ENCODE measurements at regions of chr13 and their contacts with region 1.

Region 1: DNA sequence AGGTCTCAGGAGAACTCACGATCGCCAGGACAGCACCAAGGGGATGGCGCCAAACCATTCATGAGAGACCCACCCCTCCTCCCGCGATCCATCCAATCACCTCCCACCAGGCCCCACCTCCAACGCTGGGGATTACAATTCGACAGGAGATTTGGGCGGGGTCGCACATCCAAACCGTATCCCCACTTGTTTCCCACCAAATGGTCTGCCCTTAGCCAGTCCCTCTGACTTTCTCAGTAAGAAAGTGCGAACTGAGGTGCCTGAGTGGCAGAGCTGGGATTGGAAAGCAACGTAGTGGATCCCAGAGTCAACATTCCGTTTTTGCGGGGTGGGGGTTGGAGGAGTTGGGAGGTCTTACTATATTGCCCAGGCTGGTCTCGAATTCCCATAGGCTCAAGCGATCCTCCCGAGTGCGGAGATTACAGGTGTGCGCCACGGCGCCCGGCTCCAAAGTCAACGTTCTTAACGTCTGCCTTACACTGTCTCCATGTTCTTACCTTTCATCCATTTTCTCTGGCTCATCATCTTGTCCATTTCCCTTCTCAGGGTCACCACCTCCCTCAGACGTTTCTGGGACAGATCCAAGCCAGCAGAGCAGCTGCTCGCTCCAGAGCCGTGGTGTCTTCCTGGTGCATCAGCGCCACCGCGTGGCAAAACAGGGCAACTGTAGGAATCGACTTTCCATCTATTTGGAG is 102.7 kb upstream of the ABCC4 start:
- DNase-seq: peak; percentile 78
- H3K4me3 ChIP-seq: peak overlapping the region in 2 of 3 experiments; percentile 0 to 18
- H3K27ac ChIP-seq: no peak overlapping the region
- H3K4me1 ChIP-seq: peaks cover 5% of the 10 kb centered on the region
- H3K27me3 ChIP-seq: no peaks in the 10 kb centered on the region
- CTCF ChIP-seq: peak; percentile 88 to 90
- POLR2A ChIP-seq: no peak

Region 2: GRCh38 chr13:94620286-94620896 is 783.6 kb before region 1 on chr13:
- CTCF ChIA-PET with region 1: interaction called, 19 read pairs
- POLR2A ChIA-PET with region 1: no interaction called
- dilution Hi-C with region 1: no loop called
- intact Hi-C with region 1: loop called (anchors 2 kb)
- DNase-seq: peak; percentile 52
- H3K4me3 ChIP-seq: no peak overlapping the region
- H3K27ac ChIP-seq: no peak overlapping the region
- H3K4me1 ChIP-seq: peaks cover 6% of the 10 kb centered on the region
- H3K27me3 ChIP-seq: no peaks in the 10 kb centered on the region
- CTCF ChIP-seq: peak; percentile 62 to 68
- POLR2A ChIP-seq: no peak

Region 3: DNA sequence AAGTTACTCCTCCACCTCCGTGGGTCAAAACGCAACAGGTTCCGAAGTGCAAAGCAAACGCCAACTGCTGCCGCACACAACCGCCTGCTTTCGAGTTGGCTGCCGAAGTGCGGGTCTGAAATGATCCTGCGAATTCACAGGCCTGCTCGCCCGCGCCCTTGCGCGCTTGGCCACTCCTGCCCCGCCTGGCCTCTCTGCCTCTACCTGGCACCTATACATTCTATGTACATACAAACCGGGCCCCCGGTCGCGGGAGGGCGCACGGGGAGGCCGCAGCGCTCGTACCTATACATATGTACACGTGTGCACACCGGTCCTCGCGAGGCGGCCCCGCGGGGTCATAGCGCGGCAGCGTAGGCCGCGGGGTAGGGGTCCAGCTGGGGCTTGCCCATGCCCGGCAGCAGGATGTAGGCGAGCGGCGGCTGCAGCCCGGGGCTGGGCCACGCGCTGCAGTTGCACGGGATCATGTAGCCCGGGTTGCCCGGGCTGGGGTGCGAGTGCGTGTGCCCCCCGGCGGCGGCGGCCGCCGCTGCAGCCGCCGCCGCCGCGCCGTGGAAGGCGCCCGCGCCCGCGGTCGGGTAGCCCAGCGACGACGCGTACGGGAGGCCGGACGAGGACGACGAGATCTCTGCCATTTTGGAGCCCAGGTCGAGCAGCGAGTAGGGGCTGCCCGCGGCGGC is 693.0 kb before region 1 on chr13:
- CTCF ChIA-PET with region 1: interaction called, 8 read pairs
- POLR2A ChIA-PET with region 1: no interaction called
- dilution Hi-C with region 1: no loop called
- intact Hi-C with region 1: loop called (anchors 5 kb)
- DNase-seq: no peak
- H3K4me3 ChIP-seq: no peak overlapping the region
- H3K27ac ChIP-seq: no peak overlapping the region
- H3K4me1 ChIP-seq: peaks cover 12% of the 10 kb centered on the region
- H3K27me3 ChIP-seq: peaks cover 68 to 95% of the 10 kb centered on the region in 2 experiments
- CTCF ChIP-seq: peak; percentile 31 to 33
- POLR2A ChIP-seq: no peak

Region 4: GRCh38 chr13:95301183-95301967 is 102.6 kb before region 1 on chr13 and contains the start of gene ABCC4:
- CTCF ChIA-PET with region 1: interaction called, 147 read pairs
- POLR2A ChIA-PET with region 1: no interaction called
- dilution Hi-C with region 1: no loop called
- intact Hi-C with region 1: loop called (anchors 1 kb)
- DNase-seq: peak; percentile 72
- H3K4me3 ChIP-seq: peak within 1 kb of the TSS; percentile 73 to 91 (median 83)
- H3K27ac ChIP-seq: peak within 1 kb of the TSS; percentile 84
- H3K4me1 ChIP-seq: peaks cover 18% of the 10 kb centered on the region
- H3K27me3 ChIP-seq: no peaks in the 10 kb centered on the region
- CTCF ChIP-seq: peak in 1 of 2 donors; percentile 8
- POLR2A ChIP-seq: peak; percentile 21
- total RNA-seq, gene ABCC4: 14.7 and 15.9 TPM in 2 replicates

Region 5: DNA sequence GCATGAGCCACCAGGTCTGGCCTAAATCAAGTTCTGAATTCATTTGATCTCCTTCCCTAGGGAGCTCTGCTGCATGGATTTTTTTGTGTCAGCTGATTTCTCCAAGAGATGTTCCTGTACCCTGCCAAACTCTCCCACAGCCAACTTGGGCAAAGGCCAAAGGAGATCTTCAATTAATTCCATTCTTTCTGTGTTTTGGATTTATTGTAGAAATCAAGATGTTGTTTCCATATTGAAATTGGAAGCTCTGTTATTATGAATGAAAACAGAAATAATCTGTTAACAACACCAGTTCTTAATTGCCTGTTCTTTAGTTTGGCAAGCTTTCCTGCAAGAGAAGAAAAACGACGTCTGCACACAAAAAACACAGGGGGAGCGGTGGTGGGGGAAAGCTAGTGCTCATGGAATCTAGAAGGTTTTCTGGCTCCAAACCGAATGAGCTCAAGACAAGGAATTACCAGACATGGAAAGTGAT is 16.2 kb before region 1 on chr13:
- CTCF ChIA-PET with region 1: interaction called, 76 read pairs
- POLR2A ChIA-PET with region 1: no interaction called
- dilution Hi-C with region 1: no loop called
- intact Hi-C with region 1: no loop called
- DNase-seq: no peak
- H3K4me3 ChIP-seq: no peak overlapping the region
- H3K27ac ChIP-seq: no peak overlapping the region
- H3K4me1 ChIP-seq: no peaks in the 10 kb centered on the region
- H3K27me3 ChIP-seq: peaks cover 8 to 13% of the 10 kb centered on the region in 2 experiments
- CTCF ChIP-seq: no peak
- POLR2A ChIP-seq: no peak

Region 6: GRCh38 chr13:95480131-95480545 is 76.2 kb after region 1 on chr13:
- CTCF ChIA-PET with region 1: interaction called, 46 read pairs
- POLR2A ChIA-PET with region 1: no interaction called
- dilution Hi-C with region 1: no loop called
- intact Hi-C with region 1: loop called (anchors 5 kb)
- DNase-seq: peak; percentile 65
- H3K4me3 ChIP-seq: no peak overlapping the region
- H3K27ac ChIP-seq: no peak overlapping the region
- H3K4me1 ChIP-seq: peaks cover 22% of the 10 kb centered on the region
- H3K27me3 ChIP-seq: no peaks in the 10 kb centered on the region
- CTCF ChIP-seq: no peak
- POLR2A ChIP-seq: no peak